Colonic mucosa (tissue), 4 donors: ENCODE measurements at regions of chr5 and their contacts with region 1.

Region 1: DNA sequence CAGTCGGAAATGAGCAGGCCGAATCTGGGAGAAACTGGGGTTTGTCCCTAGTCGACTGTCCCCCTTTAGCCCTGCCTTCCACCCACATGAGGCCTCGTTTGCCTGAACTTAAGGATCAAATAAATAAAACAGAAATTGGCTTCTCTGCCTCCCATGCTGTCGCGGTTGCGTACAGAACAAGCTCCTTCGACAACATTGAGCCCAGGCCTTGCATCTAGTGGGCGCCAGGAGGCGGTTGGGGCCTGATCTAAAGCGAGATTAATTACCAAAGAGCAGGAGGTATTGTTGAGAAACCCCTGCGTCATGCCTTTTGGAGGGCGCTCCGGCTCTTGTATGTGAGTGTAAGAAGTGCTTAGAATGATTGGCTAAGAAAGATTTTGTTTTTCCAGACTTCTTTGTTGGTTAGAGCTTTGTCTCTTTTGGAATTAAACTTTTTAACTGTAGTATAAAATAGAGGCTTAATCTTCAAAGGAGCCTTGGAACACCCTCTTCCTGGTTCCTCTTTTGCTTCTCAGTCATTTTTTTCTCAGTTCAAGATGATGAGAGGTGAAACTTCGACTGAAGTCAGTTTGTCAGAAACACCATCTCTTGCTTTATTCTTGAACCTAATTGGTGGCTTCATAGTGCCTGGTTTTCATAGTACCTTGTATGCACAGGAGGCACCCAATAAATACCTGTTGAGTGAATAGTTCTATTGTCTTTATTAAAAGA is 827 bp downstream of the ATP6V0E1 start:
- DNase-seq: peak; percentile 67
- H3K4me3 ChIP-seq: peak overlapping the region; percentile 97
- H3K27ac ChIP-seq: peak overlapping the region; percentile 96
- H3K4me1 ChIP-seq: no peaks in the 10 kb centered on the region
- H3K27me3 ChIP-seq: no peaks in the 10 kb centered on the region
- CTCF ChIP-seq: peak; percentile 26

Region 2: DNA sequence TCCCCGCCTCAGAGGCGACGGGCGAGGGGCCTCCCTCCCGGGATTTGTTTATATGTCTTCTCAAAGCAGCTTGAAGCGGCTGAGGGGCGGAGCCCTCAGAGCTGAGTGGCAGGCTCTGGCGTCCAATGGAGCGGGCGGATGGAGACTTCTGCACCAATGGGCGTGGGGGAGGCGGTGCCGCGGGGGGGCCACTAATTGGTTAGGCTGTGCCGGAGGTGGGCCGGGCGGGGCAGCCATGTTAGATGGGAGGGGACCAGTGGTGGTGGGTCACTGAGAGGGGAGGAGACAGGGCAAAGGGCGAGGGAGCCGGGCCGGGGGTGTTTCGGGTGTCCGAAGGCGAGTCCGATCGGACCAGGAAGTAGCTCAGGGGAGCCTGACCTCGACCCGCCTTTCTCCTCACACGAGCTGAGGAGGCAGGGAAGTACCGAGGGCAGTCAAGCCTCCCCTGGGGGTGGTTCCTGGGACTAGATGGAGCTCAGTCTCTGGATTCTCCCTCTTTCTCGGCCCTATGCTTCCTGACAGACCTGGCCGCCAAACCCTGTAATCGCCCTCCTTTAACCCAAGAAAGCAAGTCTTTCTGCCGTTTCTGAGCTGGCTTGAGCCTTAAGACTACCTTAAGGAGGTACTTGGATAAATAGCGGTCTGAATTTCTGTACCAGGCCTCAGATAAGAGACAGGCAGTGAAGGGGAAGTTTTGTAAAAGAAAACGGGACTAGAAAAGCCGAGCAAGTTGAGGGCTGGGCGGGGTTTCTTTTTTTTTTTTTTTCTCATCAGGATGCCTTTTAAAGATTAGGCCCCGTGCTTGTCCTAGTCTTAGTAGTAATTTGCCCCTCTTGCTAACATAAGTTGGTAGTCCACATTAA is 72.9 kb after region 1 on chr5:
- intact Hi-C with region 1: loop called (anchors 5 kb)
- DNase-seq: peak; percentile 99
- H3K4me3 ChIP-seq: peak overlapping the region; percentile 100
- H3K27ac ChIP-seq: peak overlapping the region; percentile 99
- H3K4me1 ChIP-seq: peaks cover 4% of the 10 kb centered on the region
- H3K27me3 ChIP-seq: no peaks in the 10 kb centered on the region
- CTCF ChIP-seq: no peak

Region 3: GRCh38 chr5:173144200-173145176 is 160.1 kb after region 1 on chr5 and contains the start of gene BNIP1:
- intact Hi-C with region 1: loop called (anchors 5 kb)
- DNase-seq: peak; percentile 100
- H3K4me3 ChIP-seq: peak within 1 kb of the TSS; percentile 72
- H3K27ac ChIP-seq: peak within 1 kb of the TSS; percentile 73
- H3K4me1 ChIP-seq: no peaks in the 10 kb centered on the region
- H3K27me3 ChIP-seq: no peaks in the 10 kb centered on the region
- CTCF ChIP-seq: peak; percentile 87
- total RNA-seq, gene BNIP1: 11.4 to 17.2 TPM

Region 4: GRCh38 chr5:173205916-173206315 is 221.5 kb after region 1 on chr5:
- intact Hi-C with region 1: loop called (anchors 2 kb)
- DNase-seq: no peak
- H3K4me3 ChIP-seq: no peak overlapping the region
- H3K27ac ChIP-seq: no peak overlapping the region
- H3K4me1 ChIP-seq: no peaks in the 10 kb centered on the region
- H3K27me3 ChIP-seq: no peaks in the 10 kb centered on the region
- CTCF ChIP-seq: no peak